ENCODE measurements at regions of chr12 and their contacts with region 1.

Region 1: GRCh38 chr12:65169320-65170208 is at the start of gene LEMD3:
- DNase-seq: peak; percentile 94
- CTCF ChIP-seq: no peak

Region 2: DNA sequence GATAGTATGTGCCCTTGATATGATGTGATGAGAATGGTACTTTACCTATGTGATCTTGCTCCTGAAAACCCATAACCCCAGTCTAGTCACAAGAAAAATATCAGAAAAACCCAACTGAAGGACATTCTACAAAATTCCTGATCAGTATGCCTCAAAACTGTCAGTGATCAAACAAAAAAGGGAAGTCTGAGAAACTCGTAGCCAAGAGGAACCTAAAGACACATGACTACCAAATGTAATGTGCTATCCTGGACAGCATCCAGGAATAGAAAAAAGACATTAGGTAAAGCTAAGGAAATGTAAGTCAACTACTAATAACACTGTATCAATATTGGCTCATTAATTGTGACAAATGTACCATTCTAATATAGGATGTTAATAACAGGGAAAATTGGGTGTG is 44.3 kb before region 1 on chr12:
- CTCF ChIA-PET with region 1: no interaction called
- POLR2A ChIA-PET with region 1: no interaction called
- DNase-seq: no peak
- CTCF ChIP-seq: no peak

Region 3: DNA sequence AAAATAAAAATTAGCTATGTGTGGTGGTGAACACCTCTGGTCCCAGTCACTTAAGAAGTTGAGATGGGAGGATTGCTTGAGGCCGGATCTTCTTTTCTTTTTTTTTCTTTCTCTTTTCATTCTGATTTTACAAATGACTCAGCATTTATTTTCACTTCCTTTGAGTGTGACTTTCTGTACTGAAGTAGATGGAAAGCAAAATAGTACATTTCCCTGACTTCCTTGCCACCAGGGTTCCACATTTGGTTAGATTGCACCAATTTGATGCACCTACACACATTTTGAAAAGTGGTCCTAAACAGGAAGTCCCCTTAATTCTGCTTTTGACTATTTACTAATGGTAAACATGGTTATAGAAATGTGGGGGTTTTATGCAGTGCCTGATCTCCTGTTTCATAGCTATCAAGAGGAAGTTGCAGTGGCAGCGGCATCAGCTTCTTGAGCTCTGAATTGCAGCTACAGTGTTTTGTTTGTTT is 13.2 kb before region 1 on chr12:
- CTCF ChIA-PET with region 1: interaction called, 12 read pairs
- POLR2A ChIA-PET with region 1: interaction called, 6 read pairs
- DNase-seq: peak; percentile 48
- CTCF ChIP-seq: no peak

Region 4: DNA sequence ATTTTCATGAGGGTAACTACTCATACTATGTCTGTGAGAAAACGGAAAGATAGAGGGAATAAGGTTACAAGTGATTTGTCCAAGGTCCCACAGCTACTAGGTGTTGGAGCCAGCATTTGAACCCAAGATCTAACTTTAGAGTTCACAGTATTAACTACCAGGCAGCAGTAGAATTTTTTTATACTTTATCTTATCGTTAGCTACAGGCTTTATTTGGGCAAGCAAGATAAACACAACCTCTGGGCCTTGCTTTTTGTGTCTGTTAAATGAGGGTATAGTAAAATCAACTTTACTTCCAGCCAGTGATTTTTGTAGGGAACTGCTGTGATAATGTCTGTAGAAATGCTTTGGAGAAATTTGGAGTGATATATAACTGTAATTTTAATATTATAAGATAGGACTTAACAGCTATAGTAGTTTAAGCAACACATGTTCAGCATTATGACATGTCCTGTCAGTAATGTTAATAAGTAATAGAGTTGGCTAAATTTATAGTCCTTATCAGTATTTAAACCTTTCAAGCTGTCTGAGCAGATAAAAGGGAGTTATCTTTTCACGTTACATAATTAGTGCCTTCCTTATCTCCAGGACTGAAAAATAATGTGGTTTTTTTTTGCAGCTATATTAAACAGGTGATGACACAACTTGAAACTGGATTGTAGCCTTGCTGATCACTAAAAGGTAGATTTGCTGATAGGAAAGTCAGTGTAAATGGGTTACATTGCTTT is 12.6 kb after region 1 on chr12:
- CTCF ChIA-PET with region 1: interaction called, 20 read pairs
- POLR2A ChIA-PET with region 1: interaction called, 4 read pairs
- DNase-seq: no peak
- CTCF ChIP-seq: no peak

Region 5: GRCh38 chr12:65200007-65200665 is 30.6 kb after region 1 on chr12:
- CTCF ChIA-PET with region 1: no interaction called
- POLR2A ChIA-PET with region 1: no interaction called
- DNase-seq: no peak
- CTCF ChIP-seq: no peak

Region 6: DNA sequence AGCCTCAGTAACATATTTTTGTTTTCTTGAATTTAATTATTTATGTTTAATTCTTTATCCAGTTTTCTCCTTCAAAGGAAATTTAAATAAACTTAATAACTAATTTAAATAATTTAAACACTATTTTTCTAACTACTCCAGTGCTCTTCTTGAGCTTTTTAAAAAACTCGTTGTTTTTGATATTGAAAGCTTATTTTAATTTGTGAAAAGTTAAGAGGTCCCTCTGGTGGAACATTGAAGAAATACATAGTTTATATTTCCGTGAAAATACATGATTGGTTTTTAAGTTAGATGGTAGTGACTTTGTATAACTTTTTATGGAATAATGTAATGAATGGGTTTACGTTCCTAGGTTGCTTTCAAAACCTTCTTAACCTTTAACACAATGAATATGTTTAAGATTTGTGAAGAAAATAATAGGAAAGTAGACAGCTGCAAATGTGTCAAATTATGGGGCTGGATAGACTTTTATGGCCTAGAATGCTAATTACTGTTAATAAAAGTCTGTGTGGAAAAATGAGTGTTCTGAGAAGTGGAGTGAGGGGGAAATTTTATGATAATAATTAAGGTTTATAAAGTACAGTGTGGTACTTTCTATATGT is 63.0 kb after region 1 on chr12:
- CTCF ChIA-PET with region 1: interaction called, 12 read pairs
- POLR2A ChIA-PET with region 1: no interaction called
- DNase-seq: peak; percentile 14
- CTCF ChIP-seq: peak; percentile 12